CD4-positive, alpha-beta memory T cell (primary cell): ENCODE measurements at regions of chr4 and their contacts with region 1.

Region 1: GRCh38 chr4:10018818-10019461 is 2.4 kb downstream of the SLC2A9 start:
- DNase-seq: peak; percentile 91 to 96 (median 94)
- H3K4me3 ChIP-seq: peak overlapping the region; percentile 46 to 66
- H3K4me3 Mint-ChIP-seq: peak overlapping the region; percentile 87 to 94 (median 91)
- H3K27ac ChIP-seq: peak overlapping the region; percentile 54
- H3K27ac Mint-ChIP-seq: peak overlapping the region; percentile 93 to 98 (median 97)
- H3K4me1 ChIP-seq: peaks cover 14% of the 10 kb centered on the region
- H3K4me1 Mint-ChIP-seq: peaks cover 3 to 18% (median 11%) of the 10 kb centered on the region in 4 donors
- H3K27me3 ChIP-seq: no peaks in the 10 kb centered on the region
- H3K27me3 Mint-ChIP-seq: peaks cover 0 to 3% of the 10 kb centered on the region in 2 donors

Region 2: DNA sequence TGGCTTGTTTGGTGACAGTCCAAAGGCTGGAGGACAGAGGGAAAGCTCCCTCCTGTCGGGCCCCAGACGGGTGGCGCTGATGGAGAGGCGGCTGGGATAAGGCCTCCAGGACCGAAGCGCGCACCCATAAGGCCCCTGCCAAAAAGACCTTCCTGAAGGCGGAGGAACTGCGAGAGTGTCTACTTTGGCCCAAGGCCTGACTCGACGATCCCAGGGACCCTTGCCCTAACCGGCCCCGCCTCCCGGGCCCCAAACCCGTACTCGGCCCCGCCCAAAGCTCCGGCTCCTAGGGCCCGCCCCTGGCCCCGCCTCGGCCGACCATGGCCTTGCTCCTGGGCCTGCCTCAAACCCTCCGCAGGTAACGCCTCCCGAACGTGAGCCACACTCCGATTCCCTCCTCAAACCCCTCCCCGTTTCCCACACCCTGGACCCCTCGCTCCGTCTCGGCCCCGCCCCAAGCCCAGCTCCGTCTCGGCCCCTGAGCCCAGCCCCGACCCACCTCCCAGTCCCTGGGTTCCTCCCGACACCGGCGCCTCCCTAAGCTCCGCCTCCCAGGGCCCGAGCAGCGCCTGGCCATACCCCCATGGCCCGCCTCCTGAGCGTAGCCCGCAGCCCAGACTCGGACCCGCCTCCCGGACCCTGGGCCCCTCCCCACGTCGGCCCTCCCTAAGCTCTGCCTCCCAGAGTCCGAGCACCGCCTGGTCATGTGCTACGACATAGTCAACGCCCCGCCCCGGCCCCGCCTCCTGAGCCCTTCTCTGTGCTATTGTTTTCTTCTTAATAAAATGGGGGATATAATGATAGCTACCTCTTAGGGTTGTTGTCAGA is 327.5 kb before region 1 on chr4:
- CTCF ChIA-PET with region 1: interaction called, 5 read pairs
- POLR2A ChIA-PET with region 1: interaction called, 12 read pairs
- intact Hi-C with region 1: loop called (anchors 1 kb)
- DNase-seq: peak; percentile 89 to 93 (median 91)
- H3K4me3 ChIP-seq: peak overlapping the region; percentile 44 to 67
- H3K4me3 Mint-ChIP-seq: peak overlapping the region; percentile 79 to 91 (median 89)
- H3K27ac ChIP-seq: peak overlapping the region; percentile 67
- H3K27ac Mint-ChIP-seq: peak overlapping the region; percentile 53 to 95 (median 88)
- H3K4me1 ChIP-seq: peaks cover 6% of the 10 kb centered on the region
- H3K4me1 Mint-ChIP-seq: peaks cover 14 to 27% (median 19%) of the 10 kb centered on the region in 4 donors
- H3K27me3 ChIP-seq: no peaks in the 10 kb centered on the region
- H3K27me3 Mint-ChIP-seq: peaks cover 0 to 2% of the 10 kb centered on the region in 2 donors

Region 3: GRCh38 chr4:10054571-10055041 is 35.7 kb after region 1 on chr4:
- CTCF ChIA-PET with region 1: no interaction called
- POLR2A ChIA-PET with region 1: no interaction called
- intact Hi-C with region 1: no loop called
- DNase-seq: no peak
- H3K4me3 ChIP-seq: no peak overlapping the region
- H3K4me3 Mint-ChIP-seq: no peak overlapping the region
- H3K27ac ChIP-seq: no peak overlapping the region
- H3K27ac Mint-ChIP-seq: peak overlapping the region in 2 of 7 donors; percentile 43 to 72
- H3K4me1 ChIP-seq: no peaks in the 10 kb centered on the region
- H3K4me1 Mint-ChIP-seq: peaks cover 0 to 2% (median under 1%) of the 10 kb centered on the region in 4 donors
- H3K27me3 ChIP-seq: no peaks in the 10 kb centered on the region
- H3K27me3 Mint-ChIP-seq: no peaks in the 10 kb centered on the region

Region 4: GRCh38 chr4:10096201-10096977 is 77.4 kb after region 1 on chr4:
- CTCF ChIA-PET with region 1: no interaction called
- POLR2A ChIA-PET with region 1: interaction called, 12 read pairs
- intact Hi-C with region 1: loop called (anchors 5 kb)
- DNase-seq: peak; percentile 70 to 91 (median 79)
- H3K4me3 ChIP-seq: peak overlapping the region in 1 of 2 donors; percentile 28
- H3K4me3 Mint-ChIP-seq: peak overlapping the region; percentile 38 to 79 (median 64)
- H3K27ac ChIP-seq: peak overlapping the region; percentile 74
- H3K27ac Mint-ChIP-seq: peak overlapping the region; percentile 89 to 99 (median 95)
- H3K4me1 ChIP-seq: peaks cover 99% of the 10 kb centered on the region
- H3K4me1 Mint-ChIP-seq: peaks cover 65 to 100% (median 87%) of the 10 kb centered on the region in 4 donors
- H3K27me3 ChIP-seq: no peaks in the 10 kb centered on the region
- H3K27me3 Mint-ChIP-seq: no peaks in the 10 kb centered on the region

Region 5: GRCh38 chr4:10164877-10165283 is 145.9 kb after region 1 on chr4:
- CTCF ChIA-PET with region 1: interaction called, 9 read pairs
- POLR2A ChIA-PET with region 1: no interaction called
- intact Hi-C with region 1: loop called (anchors 5 kb)
- DNase-seq: no peak
- H3K4me3 ChIP-seq: no peak overlapping the region
- H3K4me3 Mint-ChIP-seq: no peak overlapping the region
- H3K27ac ChIP-seq: no peak overlapping the region
- H3K27ac Mint-ChIP-seq: peak overlapping the region in 1 of 7 donors; percentile 29
- H3K4me1 ChIP-seq: peaks cover 35% of the 10 kb centered on the region
- H3K4me1 Mint-ChIP-seq: peaks cover 19 to 36% (median 29%) of the 10 kb centered on the region in 4 donors
- H3K27me3 ChIP-seq: no peaks in the 10 kb centered on the region
- H3K27me3 Mint-ChIP-seq: no peaks in the 10 kb centered on the region

Region 6: GRCh38 chr4:10461091-10461849 is 442.3 kb after region 1 on chr4:
- CTCF ChIA-PET with region 1: interaction called, 4 read pairs
- POLR2A ChIA-PET with region 1: interaction called, 3 read pairs
- intact Hi-C with region 1: loop called (anchors 2 kb)
- DNase-seq: peak; percentile 54 to 83 (median 80)
- H3K4me3 ChIP-seq: peak overlapping the region in 1 of 2 donors; percentile 34
- H3K4me3 Mint-ChIP-seq: peak overlapping the region; percentile 71 to 87 (median 84)
- H3K27ac ChIP-seq: no peak overlapping the region
- H3K27ac Mint-ChIP-seq: peak overlapping the region in 4 of 7 donors; percentile 32 to 81 (median 64)
- H3K4me1 ChIP-seq: peaks cover 25% of the 10 kb centered on the region
- H3K4me1 Mint-ChIP-seq: peaks cover 11 to 34% (median 20%) of the 10 kb centered on the region in 4 donors
- H3K27me3 ChIP-seq: peaks cover 5% of the 10 kb centered on the region
- H3K27me3 Mint-ChIP-seq: peaks cover 19 to 29% of the 10 kb centered on the region in 2 donors